Activated CD4-positive, alpha-beta memory T cell treated with anti-CD3 and anti-CD28 coated beads for 36 hours (primary cell): ENCODE measurements at regions of chr21 and their contacts with region 1.

Region 1: GRCh38 chr21:34946916-34947534 is 102.1 kb downstream of the RUNX1 start:
- DNase-seq: no peak
- H3K4me3 Mint-ChIP-seq: no peak overlapping the region
- H3K27ac Mint-ChIP-seq: peak overlapping the region; percentile 88
- H3K4me1 Mint-ChIP-seq: peaks cover 90% of the 10 kb centered on the region
- H3K27me3 Mint-ChIP-seq: no peaks in the 10 kb centered on the region

Region 2: DNA sequence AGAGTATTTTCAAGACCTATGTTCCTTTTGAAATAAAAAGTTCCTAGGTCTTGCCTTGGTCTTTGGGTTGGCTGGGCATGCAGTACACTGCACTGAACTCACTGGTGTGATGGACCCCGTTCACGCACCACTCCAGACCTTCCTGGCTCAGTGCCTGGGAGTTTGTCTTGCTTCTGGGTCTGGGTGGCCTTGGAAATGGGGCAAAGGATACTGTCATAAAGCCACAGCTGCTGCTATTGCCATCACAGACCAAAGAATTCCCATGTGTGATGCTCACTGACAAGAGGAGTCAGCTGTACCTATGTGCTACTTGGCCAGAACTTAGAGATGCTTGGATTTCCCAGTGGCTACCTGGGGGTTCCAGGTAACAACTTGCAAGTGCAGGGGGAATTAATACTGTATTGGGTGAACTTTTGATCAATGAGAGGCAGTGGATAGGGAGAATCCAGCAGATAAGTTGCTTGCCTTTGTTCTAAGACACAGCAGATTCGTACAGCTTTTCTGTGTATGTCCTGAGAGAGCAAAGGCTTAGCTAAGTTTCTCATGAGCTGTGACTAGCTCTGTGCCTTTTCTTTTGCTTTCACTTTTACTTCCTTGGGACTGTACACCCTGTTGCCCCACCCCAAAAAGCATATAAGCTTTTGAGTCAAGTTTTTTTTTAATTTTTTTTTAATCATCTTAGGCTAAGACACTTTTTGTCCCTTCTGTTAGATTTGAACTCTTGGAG is 13.3 kb before region 1 on chr21:
- CTCF ChIA-PET with region 1: interaction called, 11 read pairs
- POLR2A ChIA-PET with region 1: interaction called, 8 read pairs
- intact Hi-C with region 1: loop called (anchors 1 kb)
- DNase-seq: peak; percentile 43
- H3K4me3 Mint-ChIP-seq: peak overlapping the region; percentile 77
- H3K27ac Mint-ChIP-seq: peak overlapping the region; percentile 97
- H3K4me1 Mint-ChIP-seq: peaks cover 83% of the 10 kb centered on the region
- H3K27me3 Mint-ChIP-seq: no peaks in the 10 kb centered on the region

Region 3: DNA sequence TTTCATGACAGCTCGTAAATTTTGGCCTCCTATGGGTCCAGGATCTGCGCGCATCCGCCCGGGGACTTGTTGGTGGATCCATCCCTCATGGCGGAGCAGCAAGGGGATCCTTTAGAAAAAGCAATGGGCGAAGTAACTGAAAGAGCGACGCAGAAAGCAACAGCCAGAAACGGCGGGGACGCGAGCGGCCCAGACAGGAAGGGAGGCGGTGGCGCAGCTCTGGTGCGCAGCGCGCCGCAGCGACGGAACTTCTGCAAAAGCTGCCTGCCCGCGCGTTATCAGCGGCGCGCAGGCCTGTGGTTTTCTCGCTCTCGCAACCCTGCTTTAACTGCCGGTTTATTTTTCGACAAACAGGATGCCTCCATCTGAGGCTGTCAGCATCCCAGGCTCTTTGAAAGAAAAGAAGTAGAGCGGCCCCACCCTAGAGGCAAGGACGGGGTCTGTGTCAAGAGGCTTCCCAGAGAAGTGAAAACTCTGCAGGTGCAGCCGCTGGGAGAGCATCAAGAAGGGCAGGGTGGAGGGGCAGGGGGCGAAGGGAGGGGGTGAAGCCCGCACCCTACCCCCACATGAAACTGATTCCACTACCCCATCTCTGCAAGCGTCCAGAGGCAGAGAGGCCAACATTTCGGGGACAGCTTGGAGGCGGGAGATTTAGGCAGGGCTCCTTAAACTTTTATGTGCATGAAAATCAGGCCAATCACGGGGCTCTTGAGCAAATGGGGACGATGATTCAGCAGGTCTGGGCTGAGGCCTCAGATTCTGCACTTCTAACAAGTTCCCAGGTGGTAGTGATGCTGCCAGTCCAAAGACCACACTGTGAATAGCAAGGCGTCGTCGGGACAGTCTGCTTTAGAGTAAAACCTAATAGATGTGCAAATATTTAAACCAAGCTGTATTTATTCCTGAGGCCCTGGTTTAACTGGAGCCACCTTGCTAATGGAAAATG is 79.9 kb after region 1 on chr21:
- CTCF ChIA-PET with region 1: interaction called, 3 read pairs
- POLR2A ChIA-PET with region 1: interaction called, 4 read pairs
- intact Hi-C with region 1: loop called (anchors 2 kb)
- DNase-seq: peak; percentile 89
- H3K4me3 Mint-ChIP-seq: peak overlapping the region; percentile 75
- H3K27ac Mint-ChIP-seq: peak overlapping the region; percentile 91
- H3K4me1 Mint-ChIP-seq: peaks cover 83% of the 10 kb centered on the region
- H3K27me3 Mint-ChIP-seq: no peaks in the 10 kb centered on the region

Region 4: GRCh38 chr21:35045542-35046262 is 98.7 kb after region 1 on chr21:
- CTCF ChIA-PET with region 1: interaction called, 4 read pairs
- POLR2A ChIA-PET with region 1: interaction called, 5 read pairs
- intact Hi-C with region 1: loop called (anchors 2 kb)
- DNase-seq: peak; percentile 69
- H3K4me3 Mint-ChIP-seq: peak overlapping the region; percentile 93
- H3K27ac Mint-ChIP-seq: peak overlapping the region; percentile 99
- H3K4me1 Mint-ChIP-seq: peaks cover 94% of the 10 kb centered on the region
- H3K27me3 Mint-ChIP-seq: no peaks in the 10 kb centered on the region